Naive thymus-derived CD4-positive, alpha-beta T cell (primary cell): ENCODE measurements at regions of chr1 and their contacts with region 1.

Region 1: GRCh38 chr1:156445789-156446263 is 54.7 kb downstream of the MEF2D start:
- DNase-seq: peak; percentile 60 to 83 (median 74)
- ATAC-seq: peak; percentile 92
- H3K4me3 ChIP-seq: no peak overlapping the region
- H3K4me3 Mint-ChIP-seq: peak overlapping the region in 4 of 10 donors; percentile 8 to 26 (median 13)
- H3K27ac ChIP-seq: no peak overlapping the region
- H3K27ac Mint-ChIP-seq: peak overlapping the region in 2 of 9 donors; percentile 10 to 48
- H3K4me1 ChIP-seq: peaks cover 0 to 6% of the 10 kb centered on the region in 2 donors
- H3K4me1 Mint-ChIP-seq: peaks cover 0 to 9% (median 8%) of the 10 kb centered on the region in 7 donors
- H3K27me3 ChIP-seq: peaks cover 10 to 11% of the 10 kb centered on the region in 2 donors
- H3K27me3 Mint-ChIP-seq: peaks cover 39 to 60% (median 45%) of the 10 kb centered on the region in 5 donors

Region 2: DNA sequence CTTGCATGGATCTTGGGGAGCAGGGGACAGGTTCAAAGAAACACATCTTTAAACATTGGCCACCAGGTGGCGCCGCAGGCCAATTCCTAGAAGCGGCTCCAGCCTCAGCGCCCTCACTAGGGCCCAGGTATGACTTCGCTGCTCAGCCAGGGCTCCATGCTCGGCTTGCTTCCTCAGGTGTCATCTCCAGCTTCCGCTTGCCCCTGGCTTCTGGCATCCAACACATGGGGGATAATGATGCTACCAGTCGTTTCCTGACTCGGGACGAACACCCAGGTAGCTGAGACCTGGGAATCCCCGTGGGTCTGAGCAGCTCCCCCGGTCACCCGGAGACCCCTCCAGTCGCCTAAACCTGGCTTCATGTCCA is 355.0 kb before region 1 on chr1:
- CTCF ChIA-PET with region 1: interaction called, 5 read pairs
- POLR2A ChIA-PET with region 1: no interaction called
- intact Hi-C with region 1: loop called in 1 of 2 experiments (anchors 5 kb)
- DNase-seq: peak; percentile 69 to 86 (median 82)
- ATAC-seq: peak; percentile 97
- H3K4me3 ChIP-seq: no peak overlapping the region
- H3K4me3 Mint-ChIP-seq: no peak overlapping the region
- H3K27ac ChIP-seq: no peak overlapping the region
- H3K27ac Mint-ChIP-seq: peak overlapping the region in 5 of 9 donors; percentile 3 to 76 (median 40)
- H3K4me1 ChIP-seq: peaks cover 2 to 4% of the 10 kb centered on the region in 2 donors
- H3K4me1 Mint-ChIP-seq: peaks cover 5 to 13% (median 9%) of the 10 kb centered on the region in 7 donors
- H3K27me3 ChIP-seq: no peaks in the 10 kb centered on the region
- H3K27me3 Mint-ChIP-seq: peaks cover 5 to 57% (median 19%) of the 10 kb centered on the region in 5 donors

Region 3: GRCh38 chr1:156146020-156146768 is 299.6 kb before region 1 on chr1:
- CTCF ChIA-PET with region 1: no interaction called
- POLR2A ChIA-PET with region 1: no interaction called
- intact Hi-C with region 1: loop called in 1 of 2 experiments (anchors 10 kb)
- DNase-seq: peak in 7 of 9 donors; percentile 54 to 78 (median 71)
- ATAC-seq: peak; percentile 63
- H3K4me3 ChIP-seq: no peak overlapping the region
- H3K4me3 Mint-ChIP-seq: peak overlapping the region; percentile 34 to 79 (median 63)
- H3K27ac ChIP-seq: no peak overlapping the region
- H3K27ac Mint-ChIP-seq: peak overlapping the region in 7 of 9 donors; percentile 9 to 84 (median 63)
- H3K4me1 ChIP-seq: peaks cover 0 to 6% of the 10 kb centered on the region in 2 donors
- H3K4me1 Mint-ChIP-seq: peaks cover 6 to 28% (median 15%) of the 10 kb centered on the region in 7 donors
- H3K27me3 ChIP-seq: no peaks in the 10 kb centered on the region
- H3K27me3 Mint-ChIP-seq: peaks cover 0 to 8% (median 0%) of the 10 kb centered on the region in 5 donors

Region 4: GRCh38 chr1:156356875-156357534 is 88.8 kb before region 1 on chr1:
- CTCF ChIA-PET with region 1: interaction called, 5 read pairs
- POLR2A ChIA-PET with region 1: no interaction called
- intact Hi-C with region 1: loop called (anchors 1 kb)
- DNase-seq: peak; percentile 27 to 78 (median 54)
- ATAC-seq: peak; percentile 97
- H3K4me3 ChIP-seq: no peak overlapping the region
- H3K4me3 Mint-ChIP-seq: peak overlapping the region in 6 of 10 donors; percentile 2 to 21 (median 11)
- H3K27ac ChIP-seq: no peak overlapping the region
- H3K27ac Mint-ChIP-seq: no peak overlapping the region
- H3K4me1 ChIP-seq: no peaks in the 10 kb centered on the region
- H3K4me1 Mint-ChIP-seq: peaks cover 0 to 11% (median 4%) of the 10 kb centered on the region in 7 donors
- H3K27me3 ChIP-seq: no peaks in the 10 kb centered on the region
- H3K27me3 Mint-ChIP-seq: peaks cover 8 to 47% (median 18%) of the 10 kb centered on the region in 5 donors

Region 5: DNA sequence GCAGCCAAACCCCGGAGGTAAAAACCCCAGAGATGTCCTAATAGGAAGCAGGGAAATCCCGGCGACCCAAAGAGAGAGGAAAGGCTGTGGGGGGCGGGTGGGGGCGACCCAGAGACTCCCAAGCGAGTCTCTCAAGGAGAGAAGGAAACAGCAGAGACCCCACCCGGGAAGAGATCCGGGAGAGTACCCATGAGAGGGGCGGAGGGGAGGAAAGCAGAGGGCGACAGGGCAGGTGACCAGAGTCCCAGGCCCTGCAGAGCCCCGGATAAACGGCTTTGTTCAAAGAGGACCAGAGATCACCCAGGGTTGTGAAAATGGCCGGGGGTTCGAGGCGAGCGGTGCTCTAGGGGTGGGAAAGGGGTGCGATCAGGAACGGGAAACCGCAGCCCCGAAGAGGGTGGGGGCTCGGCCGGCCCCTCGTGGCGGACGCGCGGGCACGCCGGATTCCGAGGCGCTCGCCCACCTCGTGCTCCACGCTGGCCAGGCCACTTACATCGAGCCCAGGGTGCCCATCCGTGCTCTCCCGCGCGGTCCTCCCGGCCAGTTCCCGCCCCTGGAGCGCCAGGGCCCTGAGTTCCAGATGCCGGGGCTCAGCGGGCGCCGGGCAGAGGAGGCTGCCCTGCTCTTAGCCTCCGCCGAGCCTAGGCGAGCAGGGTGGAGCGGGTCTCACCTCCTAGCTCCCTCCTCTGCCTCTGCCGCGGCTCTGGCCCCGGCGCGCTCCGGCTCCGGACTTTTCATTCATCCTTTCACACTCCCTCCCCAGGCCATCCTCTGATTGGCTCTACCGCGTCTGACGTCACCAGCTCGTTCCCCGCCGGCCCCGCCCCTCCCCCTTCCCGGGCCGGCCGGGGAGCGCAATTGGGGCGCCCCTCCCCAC is 24.5 kb before region 1 on chr1:
- CTCF ChIA-PET with region 1: interaction called, 5 read pairs
- POLR2A ChIA-PET with region 1: no interaction called
- intact Hi-C with region 1: loop called in 1 of 2 experiments (anchors 2 kb)
- DNase-seq: peak in 8 of 9 donors; percentile 25 to 74 (median 38)
- ATAC-seq: peak; percentile 76
- H3K4me3 ChIP-seq: peak overlapping the region; percentile 77
- H3K4me3 Mint-ChIP-seq: peak overlapping the region; percentile 82 to 94 (median 87)
- H3K27ac ChIP-seq: no peak overlapping the region
- H3K27ac Mint-ChIP-seq: peak overlapping the region in 3 of 9 donors; percentile 38 to 66 (median 56)
- H3K4me1 ChIP-seq: peaks cover 15 to 24% of the 10 kb centered on the region in 2 donors
- H3K4me1 Mint-ChIP-seq: peaks cover 9 to 28% (median 16%) of the 10 kb centered on the region in 7 donors
- H3K27me3 ChIP-seq: peaks cover 0 to 37% of the 10 kb centered on the region in 2 donors
- H3K27me3 Mint-ChIP-seq: peaks cover 74 to 96% (median 81%) of the 10 kb centered on the region in 5 donors